CD8-positive, alpha-beta T cell (primary cell): ENCODE measurements at regions of chr21 and their contacts with region 1.

Region 1: DNA sequence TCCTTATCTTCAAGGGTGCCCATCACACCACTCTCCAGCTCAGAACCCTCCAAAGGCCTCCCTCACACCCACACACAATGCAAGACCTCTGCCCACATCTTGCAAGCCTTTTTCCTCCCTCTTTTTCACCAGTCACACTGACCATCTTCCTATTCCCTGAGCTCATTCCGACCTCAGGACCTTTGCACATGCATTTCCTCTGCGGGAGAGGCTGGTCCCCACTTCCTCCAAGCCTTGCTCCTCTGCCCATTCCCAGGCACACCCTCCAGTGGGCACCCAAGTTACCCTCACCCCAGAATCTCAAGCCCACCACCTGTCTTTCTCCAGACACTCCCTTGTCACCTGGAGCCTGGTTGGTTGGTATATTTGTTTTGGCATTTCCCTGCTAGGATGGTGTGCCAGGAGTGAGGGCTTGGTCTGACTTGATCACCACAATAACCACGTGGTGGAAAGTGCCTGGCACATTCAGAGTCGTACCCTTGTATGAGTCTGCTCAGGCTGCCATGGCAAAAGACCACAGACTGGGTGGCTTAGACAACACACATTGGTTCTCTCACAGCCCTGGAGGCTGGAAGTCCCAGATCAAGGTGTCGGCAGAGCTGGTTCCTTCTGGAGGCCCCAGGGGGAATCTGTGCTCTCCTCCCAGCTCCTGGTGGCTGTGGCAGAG is 13.2 kb downstream of the MX2 start:
- DNase-seq: no peak
- ATAC-seq: no peak
- H3K4me3 ChIP-seq: no peak overlapping the region
- H3K4me3 Mint-ChIP-seq: no peak overlapping the region
- H3K27ac ChIP-seq: no peak overlapping the region
- H3K27ac Mint-ChIP-seq: peak overlapping the region; percentile 52
- H3K4me1 ChIP-seq: peaks cover 34% of the 10 kb centered on the region
- H3K4me1 Mint-ChIP-seq: peaks cover 41% of the 10 kb centered on the region
- H3K27me3 ChIP-seq: no peaks in the 10 kb centered on the region
- H3K27me3 Mint-ChIP-seq: no peaks in the 10 kb centered on the region
- CTCF ChIP-seq: no peak

Region 2: GRCh38 chr21:41333752-41334151 is 41.2 kb before region 1 on chr21:
- CTCF ChIA-PET with region 1: no interaction called
- POLR2A ChIA-PET with region 1: no interaction called
- intact Hi-C with region 1: loop called in 1 of 2 experiments (anchors 5 kb)
- DNase-seq: no peak
- ATAC-seq: no peak
- H3K4me3 ChIP-seq: no peak overlapping the region
- H3K4me3 Mint-ChIP-seq: no peak overlapping the region
- H3K27ac ChIP-seq: no peak overlapping the region
- H3K27ac Mint-ChIP-seq: no peak overlapping the region
- H3K4me1 ChIP-seq: no peaks in the 10 kb centered on the region
- H3K4me1 Mint-ChIP-seq: no peaks in the 10 kb centered on the region
- H3K27me3 ChIP-seq: no peaks in the 10 kb centered on the region
- H3K27me3 Mint-ChIP-seq: no peaks in the 10 kb centered on the region
- CTCF ChIP-seq: no peak